Activated CD4-positive, alpha-beta T cell treated with anti-CD3 and anti-CD28 coated beads for 36 hours (primary cell): ENCODE measurements at regions of chr9 and their contacts with region 1.

Region 1: DNA sequence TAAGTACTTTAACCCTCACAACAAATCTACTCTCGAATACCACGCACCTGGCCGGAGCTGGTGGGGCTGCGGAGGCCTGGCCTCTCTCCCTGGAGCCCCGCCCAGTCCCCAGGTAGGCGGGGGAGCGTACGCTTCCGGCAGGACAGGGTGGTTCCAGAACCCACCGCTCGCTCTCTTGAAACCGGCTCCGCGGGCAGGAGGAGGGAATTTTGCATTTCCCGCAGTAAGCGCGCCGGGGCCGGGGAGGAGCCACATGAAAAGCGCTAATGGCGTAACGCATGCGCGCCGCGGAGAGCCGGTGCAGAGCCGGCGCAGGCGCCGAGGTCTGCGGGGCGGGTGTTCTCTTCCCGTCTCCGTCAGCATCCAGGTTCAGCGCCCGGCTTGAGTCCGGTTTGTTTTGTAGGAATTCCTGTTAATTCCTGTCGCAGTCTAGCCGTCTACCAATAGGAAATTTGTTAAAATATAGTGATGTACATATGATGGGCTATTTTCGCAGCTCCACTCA is 20.8 kb downstream of the CAVIN4 start:
- DNase-seq: peak; percentile 87
- ATAC-seq: peak; percentile 87
- H3K4me3 Mint-ChIP-seq: peak overlapping the region; percentile 59
- H3K27ac Mint-ChIP-seq: peak overlapping the region; percentile 45
- H3K4me1 Mint-ChIP-seq: peaks cover 20% of the 10 kb centered on the region
- H3K27me3 Mint-ChIP-seq: no peaks in the 10 kb centered on the region

Region 2: GRCh38 chr9:99162759-99163364 is 1435.8 kb before region 1 on chr9:
- CTCF ChIA-PET with region 1: no interaction called
- POLR2A ChIA-PET with region 1: no interaction called
- intact Hi-C with region 1: loop called in 1 of 2 experiments (anchors 5 kb)
- DNase-seq: no peak
- ATAC-seq: peak; percentile 35
- H3K4me3 Mint-ChIP-seq: no peak overlapping the region
- H3K27ac Mint-ChIP-seq: no peak overlapping the region
- H3K4me1 Mint-ChIP-seq: peaks cover 22% of the 10 kb centered on the region
- H3K27me3 Mint-ChIP-seq: peaks cover 8% of the 10 kb centered on the region

Region 3: GRCh38 chr9:99626426-99626825 is 972.3 kb before region 1 on chr9:
- CTCF ChIA-PET with region 1: no interaction called
- POLR2A ChIA-PET with region 1: no interaction called
- intact Hi-C with region 1: no loop called
- DNase-seq: no peak
- ATAC-seq: no peak
- H3K4me3 Mint-ChIP-seq: no peak overlapping the region
- H3K27ac Mint-ChIP-seq: no peak overlapping the region
- H3K4me1 Mint-ChIP-seq: no peaks in the 10 kb centered on the region
- H3K27me3 Mint-ChIP-seq: peaks cover 9% of the 10 kb centered on the region

Region 4: DNA sequence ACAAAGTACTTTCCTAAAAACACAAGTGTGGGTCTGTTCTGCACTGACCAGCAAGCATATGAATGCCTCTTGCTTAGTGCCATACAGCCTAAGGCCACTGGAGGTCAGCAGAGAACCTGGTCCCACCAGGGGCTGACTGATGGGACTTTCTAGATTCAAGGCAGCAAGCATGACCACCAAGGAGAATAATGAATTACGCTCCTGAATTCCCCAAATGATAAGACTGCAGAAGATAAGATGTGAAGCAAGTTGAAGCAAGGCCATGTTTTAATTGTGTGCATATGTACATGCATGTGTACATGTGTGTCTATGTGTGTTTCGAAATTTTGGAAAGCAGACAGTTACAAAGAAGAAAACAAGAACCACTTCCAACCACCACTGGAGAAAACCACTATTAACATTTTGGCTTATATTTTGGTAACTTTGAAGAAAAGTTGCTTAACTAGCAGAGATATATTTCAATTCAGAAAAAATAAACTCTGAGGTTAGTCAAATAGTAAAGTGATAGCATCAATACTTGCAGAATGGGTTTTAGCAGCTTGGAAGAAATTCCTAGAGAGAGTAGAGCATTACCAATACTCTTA is 570.4 kb before region 1 on chr9:
- CTCF ChIA-PET with region 1: no interaction called
- POLR2A ChIA-PET with region 1: no interaction called
- intact Hi-C with region 1: loop called (anchors 1 to 2 kb)
- DNase-seq: peak; percentile 82
- ATAC-seq: peak; percentile 93
- H3K4me3 Mint-ChIP-seq: no peak overlapping the region
- H3K27ac Mint-ChIP-seq: no peak overlapping the region
- H3K4me1 Mint-ChIP-seq: peaks cover 3% of the 10 kb centered on the region
- H3K27me3 Mint-ChIP-seq: no peaks in the 10 kb centered on the region

Region 5: GRCh38 chr9:100411472-100412283 is 187.0 kb before region 1 on chr9:
- CTCF ChIA-PET with region 1: interaction called, 3 read pairs
- POLR2A ChIA-PET with region 1: no interaction called
- intact Hi-C with region 1: loop called in 1 of 2 experiments (anchors 2 kb)
- DNase-seq: peak; percentile 92
- ATAC-seq: peak; percentile 100
- H3K4me3 Mint-ChIP-seq: peak overlapping the region; percentile 70
- H3K27ac Mint-ChIP-seq: peak overlapping the region; percentile 74
- H3K4me1 Mint-ChIP-seq: peaks cover 15% of the 10 kb centered on the region
- H3K27me3 Mint-ChIP-seq: peaks cover 14% of the 10 kb centered on the region

Region 6: DNA sequence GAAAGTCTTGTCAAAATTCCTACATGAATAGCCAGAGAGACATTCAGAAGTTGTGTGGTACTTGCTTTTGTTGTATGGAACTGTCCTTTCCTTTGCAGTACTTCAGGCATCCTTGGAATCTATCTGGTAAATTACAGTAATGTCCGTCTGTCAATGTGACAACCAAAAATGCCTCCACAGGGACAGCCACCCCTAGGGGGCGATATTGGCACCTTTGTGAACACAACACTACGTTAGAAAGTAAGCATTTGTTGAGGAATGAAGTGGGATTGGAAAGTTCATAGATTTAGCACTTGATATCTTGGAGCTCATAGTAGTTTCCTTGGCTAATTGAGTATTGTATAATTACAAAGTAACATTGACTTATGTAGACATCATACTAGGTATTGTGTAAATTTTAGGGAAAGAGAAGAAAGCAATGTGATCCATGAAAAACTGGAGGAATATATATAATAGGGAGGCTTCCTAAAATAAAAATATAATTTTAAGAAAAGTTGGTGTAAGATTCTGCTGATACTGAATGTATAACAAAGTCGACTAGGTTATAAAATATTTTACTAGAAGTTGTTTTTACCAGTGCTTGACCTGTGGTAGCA is 93.0 kb before region 1 on chr9:
- CTCF ChIA-PET with region 1: interaction called, 4 read pairs
- POLR2A ChIA-PET with region 1: no interaction called
- intact Hi-C with region 1: loop called (anchors 1 kb)
- DNase-seq: peak; percentile 87
- ATAC-seq: peak; percentile 33
- H3K4me3 Mint-ChIP-seq: no peak overlapping the region
- H3K27ac Mint-ChIP-seq: no peak overlapping the region
- H3K4me1 Mint-ChIP-seq: no peaks in the 10 kb centered on the region
- H3K27me3 Mint-ChIP-seq: peaks cover 2% of the 10 kb centered on the region

Region 7: DNA sequence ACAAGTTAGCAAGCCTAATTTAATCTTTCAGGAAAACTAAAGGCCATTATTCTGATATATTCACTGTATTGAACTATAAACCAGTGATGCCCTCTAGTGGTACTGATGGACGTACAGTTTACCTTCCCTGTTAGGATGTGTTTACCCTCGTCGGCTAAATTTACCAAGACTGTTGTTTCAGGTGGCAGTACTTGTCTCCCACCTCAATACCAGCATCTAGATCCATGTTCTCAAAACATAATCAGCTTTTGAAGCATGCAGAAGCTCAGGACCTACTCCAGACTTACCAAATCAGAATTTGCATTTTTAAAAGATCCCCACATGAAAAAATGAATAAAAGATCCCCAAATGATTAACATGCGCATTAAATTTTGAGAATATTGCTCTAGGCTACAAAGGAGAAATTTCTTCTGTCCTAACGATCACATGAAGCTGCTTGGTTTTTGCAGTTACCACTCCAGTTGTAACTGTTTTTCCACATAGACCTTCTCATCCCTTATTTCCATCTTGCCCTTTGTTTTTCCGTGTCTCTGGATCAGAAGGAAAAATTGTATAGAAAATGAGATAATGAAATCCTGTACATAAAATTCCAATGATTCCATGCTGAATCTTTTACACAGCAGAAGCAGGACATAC is 789.3 kb after region 1 on chr9:
- CTCF ChIA-PET with region 1: no interaction called
- POLR2A ChIA-PET with region 1: no interaction called
- intact Hi-C with region 1: loop called in 1 of 2 experiments (anchors 2 kb)
- DNase-seq: no peak
- ATAC-seq: peak; percentile 76
- H3K4me3 Mint-ChIP-seq: no peak overlapping the region
- H3K27ac Mint-ChIP-seq: peak overlapping the region; percentile 67
- H3K4me1 Mint-ChIP-seq: peaks cover 23% of the 10 kb centered on the region
- H3K27me3 Mint-ChIP-seq: no peaks in the 10 kb centered on the region